ENCODE measurements at regions of chr14 and their contacts with region 1.

Region 1: GRCh38 chr14:80987235-80988032 is 32.0 kb downstream of the TSHR start:
- DNase-seq: peak; percentile 73
- ATAC-seq: peak; percentile 86
- H3K4me3 Mint-ChIP-seq: no peak overlapping the region
- H3K27ac Mint-ChIP-seq: no peak overlapping the region
- H3K4me1 Mint-ChIP-seq: no peaks in the 10 kb centered on the region
- H3K27me3 Mint-ChIP-seq: no peaks in the 10 kb centered on the region
- CTCF ChIP-seq: peak; percentile 73

Region 2: GRCh38 chr14:80941241-80942182 is 45.9 kb before region 1 on chr14 and contains the start of gene CEP128:
- CTCF ChIA-PET with region 1: interaction called, 24 read pairs
- POLR2A ChIA-PET with region 1: no interaction called
- DNase-seq: peak; percentile 97
- ATAC-seq: peak; percentile 97
- H3K4me3 Mint-ChIP-seq: peak within 1 kb of the TSS; percentile 90
- H3K27ac Mint-ChIP-seq: peak within 1 kb of the TSS; percentile 84
- H3K4me1 Mint-ChIP-seq: peaks cover 12% of the 10 kb centered on the region
- H3K27me3 Mint-ChIP-seq: no peaks in the 10 kb centered on the region; the same call in 1 of the 2 replicates
- CTCF ChIP-seq: no peak
- total RNA-seq, gene CEP128: 12.0 to 17.3 TPM (median 16.5 TPM) in 3 replicates

Region 3: DNA sequence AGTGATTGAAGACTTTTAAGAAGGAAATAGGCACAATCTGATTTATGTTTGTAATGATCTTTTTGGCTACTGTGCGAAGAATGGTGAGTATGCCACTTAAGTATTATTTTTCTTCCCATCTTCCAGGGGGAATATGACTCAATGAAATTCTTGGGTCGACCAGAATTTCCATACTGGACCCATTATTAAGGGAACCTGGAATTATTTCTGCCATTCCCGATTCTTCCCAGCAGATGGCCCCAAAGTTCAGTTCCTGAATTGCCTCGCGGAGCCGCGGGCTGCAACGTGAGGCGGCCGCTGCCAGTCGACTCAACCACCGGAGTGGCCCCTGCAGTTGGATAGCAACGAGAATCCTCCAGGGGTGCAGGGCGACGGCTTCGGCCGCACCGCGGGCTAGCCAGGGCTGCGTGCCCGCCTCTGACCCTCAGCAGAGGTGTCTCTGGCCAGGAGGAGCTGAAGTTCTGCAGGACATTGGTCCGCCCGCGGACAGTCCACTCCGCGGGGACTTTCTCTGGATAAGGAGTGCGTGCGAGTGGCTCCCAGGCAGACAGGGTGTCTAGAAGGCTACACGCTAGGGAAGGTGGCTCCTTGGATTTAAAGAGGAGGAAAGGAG is 32.6 kb before region 1 on chr14:
- CTCF ChIA-PET with region 1: interaction called, 38 read pairs
- POLR2A ChIA-PET with region 1: no interaction called
- DNase-seq: peak; percentile 85
- ATAC-seq: peak; percentile 90
- H3K4me3 Mint-ChIP-seq: peak overlapping the region; percentile 91
- H3K27ac Mint-ChIP-seq: no peak overlapping the region
- H3K4me1 Mint-ChIP-seq: peaks cover 8% of the 10 kb centered on the region
- H3K27me3 Mint-ChIP-seq: peaks cover 41% of the 10 kb centered on the region
- CTCF ChIP-seq: peak; percentile 50

Region 4: DNA sequence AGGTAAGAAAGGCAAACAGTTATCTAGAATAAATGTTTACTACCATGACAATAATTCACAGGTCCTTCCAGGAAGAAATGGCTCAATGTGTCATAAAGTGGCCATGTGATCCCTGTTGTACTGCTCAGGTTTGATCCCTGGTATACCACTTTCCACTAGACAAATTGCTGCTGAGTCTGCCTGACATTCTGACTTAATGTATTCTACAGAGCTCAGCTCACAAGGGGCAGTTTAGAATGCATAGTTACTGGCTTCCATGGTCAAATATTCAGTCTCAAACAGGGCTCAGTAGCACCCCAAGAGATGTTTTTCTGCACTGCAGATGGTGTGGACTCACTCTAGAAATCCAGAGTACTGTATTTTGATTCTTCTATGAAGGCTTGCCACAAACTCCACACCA is 10.2 kb before region 1 on chr14:
- CTCF ChIA-PET with region 1: interaction called, 25 read pairs
- POLR2A ChIA-PET with region 1: no interaction called
- DNase-seq: no peak
- ATAC-seq: peak; percentile 96
- H3K4me3 Mint-ChIP-seq: no peak overlapping the region
- H3K27ac Mint-ChIP-seq: no peak overlapping the region
- H3K4me1 Mint-ChIP-seq: no peaks in the 10 kb centered on the region
- H3K27me3 Mint-ChIP-seq: no peaks in the 10 kb centered on the region
- CTCF ChIP-seq: no peak

Region 5: GRCh38 chr14:81051547-81051946 is 64.1 kb after region 1 on chr14:
- CTCF ChIA-PET with region 1: no interaction called
- POLR2A ChIA-PET with region 1: no interaction called
- DNase-seq: no peak
- ATAC-seq: no peak
- H3K4me3 Mint-ChIP-seq: no peak overlapping the region
- H3K27ac Mint-ChIP-seq: no peak overlapping the region
- H3K4me1 Mint-ChIP-seq: no peaks in the 10 kb centered on the region
- H3K27me3 Mint-ChIP-seq: peaks cover 5% of the 10 kb centered on the region; the same call in 1 of the 2 replicates
- CTCF ChIP-seq: no peak

Region 6: GRCh38 chr14:81170104-81170828 is 182.8 kb after region 1 on chr14:
- CTCF ChIA-PET with region 1: interaction called, 10 read pairs
- POLR2A ChIA-PET with region 1: no interaction called
- DNase-seq: peak; percentile 83
- ATAC-seq: peak; percentile 93
- H3K4me3 Mint-ChIP-seq: peak overlapping the region; percentile 88
- H3K27ac Mint-ChIP-seq: peak overlapping the region; percentile 85
- H3K4me1 Mint-ChIP-seq: peaks cover 6% of the 10 kb centered on the region
- H3K27me3 Mint-ChIP-seq: no peaks in the 10 kb centered on the region; the same call in 1 of the 2 replicates
- CTCF ChIP-seq: peak; percentile 81